ENCODE measurements at regions of chr10 and their contacts with region 1.

Region 1: GRCh38 chr10:123069246-123069986 is 60.6 kb downstream of the ACADSB start:
- DNase-seq: no peak
- H3K4me3 ChIP-seq: no peak overlapping the region
- H3K27ac ChIP-seq: no peak overlapping the region
- H3K4me1 ChIP-seq: no peaks in the 10 kb centered on the region
- H3K27me3 ChIP-seq: no peaks in the 10 kb centered on the region
- CTCF ChIP-seq: no peak
- POLR2A ChIP-seq: no peak

Region 2: GRCh38 chr10:121194696-121195523 is 1874.5 kb before region 1 on chr10:
- CTCF ChIA-PET with region 1: no interaction called
- POLR2A ChIA-PET with region 1: no interaction called
- dilution Hi-C with region 1: no loop called
- intact Hi-C with region 1: loop called (anchors 10 kb)
- DNase-seq: no peak
- H3K4me3 ChIP-seq: no peak overlapping the region
- H3K27ac ChIP-seq: no peak overlapping the region
- H3K4me1 ChIP-seq: no peaks in the 10 kb centered on the region
- H3K27me3 ChIP-seq: no peaks in the 10 kb centered on the region
- CTCF ChIP-seq: no peak
- POLR2A ChIP-seq: no peak

Region 3: GRCh38 chr10:122592161-122592560 is 477.3 kb before region 1 on chr10:
- CTCF ChIA-PET with region 1: no interaction called
- POLR2A ChIA-PET with region 1: no interaction called
- dilution Hi-C with region 1: no loop called
- intact Hi-C with region 1: no loop called
- DNase-seq: no peak
- H3K4me3 ChIP-seq: no peak overlapping the region
- H3K27ac ChIP-seq: no peak overlapping the region
- H3K4me1 ChIP-seq: no peaks in the 10 kb centered on the region
- H3K27me3 ChIP-seq: no peaks in the 10 kb centered on the region
- CTCF ChIP-seq: no peak
- POLR2A ChIP-seq: no peak

Region 4: GRCh38 chr10:123117644-123118417 is 48.4 kb after region 1 on chr10:
- CTCF ChIA-PET with region 1: no interaction called
- POLR2A ChIA-PET with region 1: no interaction called
- dilution Hi-C with region 1: no loop called
- intact Hi-C with region 1: no loop called
- DNase-seq: no peak
- H3K4me3 ChIP-seq: no peak overlapping the region
- H3K27ac ChIP-seq: no peak overlapping the region
- H3K4me1 ChIP-seq: no peaks in the 10 kb centered on the region
- H3K27me3 ChIP-seq: peaks cover 2 to 11% of the 10 kb centered on the region in 2 experiments
- CTCF ChIP-seq: no peak
- POLR2A ChIP-seq: no peak

Region 5: DNA sequence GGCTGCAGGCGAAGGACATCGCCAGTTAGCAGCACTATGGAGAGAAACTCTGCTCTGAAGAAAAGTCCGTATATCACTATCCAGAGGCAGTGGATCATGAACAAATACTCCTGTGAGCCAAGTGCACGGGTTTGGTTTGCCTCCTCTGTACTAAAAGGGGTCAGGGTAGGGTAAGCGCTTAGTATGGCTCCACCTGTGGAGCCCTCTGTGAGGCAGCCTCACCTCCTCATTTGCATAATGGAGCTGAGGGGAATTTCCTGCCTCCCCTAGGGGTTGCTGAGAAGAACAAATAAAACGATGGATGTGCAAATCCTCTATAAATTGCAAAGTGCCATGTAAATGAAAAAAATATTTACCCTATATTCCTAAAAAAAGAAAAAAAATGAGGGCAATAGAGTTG is 660.1 kb after region 1 on chr10:
- CTCF ChIA-PET with region 1: no interaction called
- POLR2A ChIA-PET with region 1: no interaction called
- dilution Hi-C with region 1: no loop called
- intact Hi-C with region 1: no loop called
- DNase-seq: no peak
- H3K4me3 ChIP-seq: no peak overlapping the region
- H3K27ac ChIP-seq: no peak overlapping the region
- H3K4me1 ChIP-seq: no peaks in the 10 kb centered on the region
- H3K27me3 ChIP-seq: no peaks in the 10 kb centered on the region
- CTCF ChIP-seq: no peak
- POLR2A ChIP-seq: no peak

Measured in endothelial cell of umbilical vein (primary cell).